Adrenal gland (tissue), 19 donors: ENCODE measurements at regions of chr21 and their contacts with region 1.

Region 1: DNA sequence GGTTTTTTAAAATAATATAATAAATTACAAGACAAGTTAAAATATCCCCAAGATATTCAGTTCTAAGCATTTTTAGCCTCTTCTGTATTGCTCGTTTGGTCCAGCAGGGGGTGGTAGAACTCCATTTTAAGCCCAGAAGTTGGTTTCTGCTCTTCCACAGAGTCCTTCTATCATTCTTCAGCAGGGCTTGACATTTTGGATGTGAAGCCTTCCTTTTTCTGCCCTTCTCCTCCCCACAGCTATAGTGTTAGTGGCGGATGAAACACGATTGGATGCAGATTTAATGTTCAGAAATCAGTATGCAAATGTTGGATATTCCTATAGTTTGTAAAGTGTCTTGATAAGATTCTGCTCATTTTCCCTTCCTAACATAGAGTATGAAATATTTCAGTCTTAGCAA is 1.4 kb downstream of the NCAM2 start:
- DNase-seq: peak; percentile 30 to 84 (median 55)
- H3K4me3 ChIP-seq: no peak overlapping the region
- H3K27ac ChIP-seq: no peak overlapping the region
- H3K4me1 ChIP-seq: peaks cover 15 to 43% of the 10 kb centered on the region in 2 donors
- H3K27me3 ChIP-seq: no peaks in the 10 kb centered on the region
- CTCF ChIP-seq: peak; percentile 77 to 96 (median 82)
- POLR2A ChIP-seq: no peak

Region 2: GRCh38 chr21:20942523-20942922 is 57.1 kb before region 1 on chr21:
- intact Hi-C with region 1: no loop called
- DNase-seq: no peak
- H3K4me3 ChIP-seq: no peak overlapping the region
- H3K27ac ChIP-seq: no peak overlapping the region
- H3K4me1 ChIP-seq: no peaks in the 10 kb centered on the region
- H3K27me3 ChIP-seq: no peaks in the 10 kb centered on the region
- CTCF ChIP-seq: no peak
- POLR2A ChIP-seq: no peak

Region 3: GRCh38 chr21:21101911-21102310 is 102.3 kb after region 1 on chr21:
- intact Hi-C with region 1: loop called in 1 of 2 experiments (anchors 10 kb)
- DNase-seq: peak; percentile 45 to 81 (median 60)
- H3K4me3 ChIP-seq: no peak overlapping the region
- H3K27ac ChIP-seq: peak overlapping the region in 1 of 5 donors; percentile 27
- H3K4me1 ChIP-seq: no peaks in the 10 kb centered on the region
- H3K27me3 ChIP-seq: no peaks in the 10 kb centered on the region
- CTCF ChIP-seq: peak; percentile 16 to 60 (median 48)
- POLR2A ChIP-seq: no peak

Region 4: DNA sequence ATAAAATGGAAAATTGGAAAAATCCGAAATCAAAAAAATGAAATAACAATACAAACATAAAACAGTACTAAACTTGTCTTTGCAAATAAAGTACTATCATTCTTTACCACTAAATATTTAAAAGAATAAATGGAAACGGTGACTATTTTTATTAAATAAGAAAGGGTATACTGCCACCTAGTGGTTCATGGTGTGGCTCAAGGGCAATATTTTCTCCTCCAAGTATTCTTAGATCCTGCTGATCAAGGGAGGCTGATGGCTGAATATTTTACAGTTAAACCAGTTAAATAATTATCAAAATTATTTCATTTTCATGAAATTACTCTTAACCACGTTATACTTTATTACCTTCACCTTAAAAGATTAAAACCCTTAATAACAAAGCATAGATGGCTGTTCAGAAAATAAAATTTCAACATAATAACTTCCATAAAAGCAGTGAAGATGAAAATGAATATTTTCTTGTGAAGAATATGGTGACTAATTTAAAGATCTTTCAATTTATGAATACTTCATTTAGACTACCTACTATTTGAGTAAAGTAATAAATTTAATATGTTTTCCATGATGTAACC is 1792.4 kb after region 1 on chr21:
- intact Hi-C with region 1: loop called in 1 of 2 experiments (anchors 10 kb)
- DNase-seq: peak in 5 of 7 donors; percentile 15 to 63 (median 27)
- H3K4me3 ChIP-seq: no peak overlapping the region
- H3K27ac ChIP-seq: no peak overlapping the region
- H3K4me1 ChIP-seq: no peaks in the 10 kb centered on the region
- H3K27me3 ChIP-seq: no peaks in the 10 kb centered on the region
- CTCF ChIP-seq: peak; percentile 48 to 83 (median 74)
- POLR2A ChIP-seq: no peak